Endothelial cell of umbilical vein (primary cell): ENCODE measurements at regions of chr10 and their contacts with region 1.

Region 1: GRCh38 chr10:88932539-88933256 is 19.9 kb downstream of the ACTA2 start:
- DNase-seq: peak; percentile 55
- H3K4me3 ChIP-seq: no peak overlapping the region
- H3K27ac ChIP-seq: no peak overlapping the region
- H3K4me1 ChIP-seq: peaks cover 4% of the 10 kb centered on the region
- H3K27me3 ChIP-seq: peaks cover 0 to 2% of the 10 kb centered on the region in 2 experiments
- CTCF ChIP-seq: peak; percentile 75 to 84
- POLR2A ChIP-seq: no peak

Region 2: DNA sequence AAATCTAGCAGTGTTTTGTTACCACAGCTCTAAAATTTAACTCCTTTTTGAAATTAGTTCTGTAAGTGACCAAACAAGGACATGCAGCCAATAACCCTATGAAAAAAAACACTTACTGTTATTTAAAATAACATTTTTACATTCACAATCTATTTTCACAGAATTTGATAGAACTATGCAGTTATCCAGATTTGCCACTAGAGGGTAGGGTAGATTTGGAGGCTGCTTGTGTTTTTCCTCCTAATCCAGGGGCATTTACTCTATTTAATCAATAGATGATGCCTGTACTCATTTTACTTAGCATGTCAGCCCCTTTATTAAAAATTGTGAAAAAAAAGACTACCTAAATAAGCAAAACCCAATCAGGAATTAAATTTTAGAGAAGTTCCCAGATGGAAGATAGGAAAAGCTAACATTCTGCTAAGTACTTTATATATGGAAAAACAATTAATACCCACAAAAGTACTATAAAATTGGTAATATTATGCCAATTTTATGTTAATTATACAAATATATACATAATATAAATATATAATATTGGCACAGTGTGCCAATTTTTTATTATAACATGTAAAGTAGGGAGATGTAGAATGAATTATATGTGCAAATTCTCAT is 244.7 kb before region 1 on chr10:
- CTCF ChIA-PET with region 1: interaction called, 9 read pairs
- POLR2A ChIA-PET with region 1: no interaction called
- dilution Hi-C with region 1: no loop called
- intact Hi-C with region 1: loop called (anchors 5 kb)
- DNase-seq: peak; percentile 31
- H3K4me3 ChIP-seq: no peak overlapping the region
- H3K27ac ChIP-seq: no peak overlapping the region
- H3K4me1 ChIP-seq: no peaks in the 10 kb centered on the region
- H3K27me3 ChIP-seq: no peaks in the 10 kb centered on the region
- CTCF ChIP-seq: peak; percentile 45 to 53
- POLR2A ChIP-seq: no peak

Region 3: GRCh38 chr10:88880282-88881076 is 52.2 kb before region 1 on chr10:
- CTCF ChIA-PET with region 1: interaction called, 33 read pairs
- POLR2A ChIA-PET with region 1: no interaction called
- dilution Hi-C with region 1: no loop called
- intact Hi-C with region 1: loop called (anchors 1 kb)
- DNase-seq: peak; percentile 82
- H3K4me3 ChIP-seq: peak overlapping the region; percentile 30 to 55 (median 55)
- H3K27ac ChIP-seq: peak overlapping the region; percentile 84
- H3K4me1 ChIP-seq: peaks cover 30% of the 10 kb centered on the region
- H3K27me3 ChIP-seq: no peaks in the 10 kb centered on the region
- CTCF ChIP-seq: peak; percentile 5 to 28
- POLR2A ChIP-seq: peak; percentile 83

Region 4: GRCh38 chr10:88979153-88979562 is 46.5 kb after region 1 on chr10:
- CTCF ChIA-PET with region 1: interaction called, 12 read pairs
- POLR2A ChIA-PET with region 1: no interaction called
- dilution Hi-C with region 1: no loop called
- intact Hi-C with region 1: no loop called
- DNase-seq: no peak
- H3K4me3 ChIP-seq: no peak overlapping the region
- H3K27ac ChIP-seq: no peak overlapping the region
- H3K4me1 ChIP-seq: peaks cover 21% of the 10 kb centered on the region
- H3K27me3 ChIP-seq: no peaks in the 10 kb centered on the region
- CTCF ChIP-seq: no peak
- POLR2A ChIP-seq: no peak

Region 5: GRCh38 chr10:89207181-89207800 is 274.6 kb after region 1 on chr10 and contains the start of gene CH25H:
- CTCF ChIA-PET with region 1: interaction called, 27 read pairs
- POLR2A ChIA-PET with region 1: no interaction called
- dilution Hi-C with region 1: no loop called
- intact Hi-C with region 1: no loop called
- DNase-seq: peak; percentile 76
- H3K4me3 ChIP-seq: peak within 1 kb of the TSS; percentile 34 to 84 (median 49)
- H3K27ac ChIP-seq: peak within 1 kb of the TSS; percentile 7
- H3K4me1 ChIP-seq: peaks cover 23% of the 10 kb centered on the region
- H3K27me3 ChIP-seq: peaks cover 16 to 27% of the 10 kb centered on the region in 2 experiments
- CTCF ChIP-seq: no peak
- POLR2A ChIP-seq: no peak
- total RNA-seq, gene CH25H: 0.32 TPM in 1 of 2 replicates, not detected in the other